ENCODE measurements at regions of chr1 and their contacts with region 1.

Region 1: DNA sequence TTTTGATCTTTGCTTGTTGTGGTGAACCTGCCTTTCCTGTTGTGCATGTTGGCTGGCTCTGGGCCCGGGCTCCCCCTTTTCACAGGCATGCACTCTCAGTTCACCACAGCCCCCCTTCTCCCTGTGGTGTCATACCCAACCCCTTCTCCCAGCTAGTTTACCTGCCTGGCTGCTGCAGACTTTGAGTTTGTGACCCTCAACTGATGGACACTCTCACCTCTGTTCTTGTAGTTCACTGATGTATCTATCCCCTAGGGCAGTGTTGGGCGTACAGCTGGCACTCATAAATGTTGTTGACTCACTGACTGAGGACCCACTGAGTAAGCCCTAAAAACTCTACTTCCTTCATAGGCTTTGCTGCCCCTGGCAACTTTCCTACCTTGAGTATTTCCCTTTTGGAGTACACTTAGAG is 54.9 kb downstream of the WDR64 start:
- DNase-seq: peak; percentile 87 to 99
- H3K4me3 ChIP-seq: no peak overlapping the region; the same call in 1 of the 2 replicates
- H3K27ac ChIP-seq: peak overlapping the region; percentile 77
- H3K4me1 ChIP-seq: peaks cover 58% of the 10 kb centered on the region
- H3K27me3 ChIP-seq: no peaks in the 10 kb centered on the region
- CTCF ChIP-seq: no peak

Region 2: GRCh38 chr1:240784776-240785175 is 922.2 kb before region 1 on chr1:
- CTCF ChIA-PET with region 1: no interaction called
- POLR2A ChIA-PET with region 1: no interaction called
- intact Hi-C with region 1: loop called (anchors 10 kb)
- DNase-seq: no peak
- H3K4me3 ChIP-seq: no peak overlapping the region
- H3K27ac ChIP-seq: no peak overlapping the region
- H3K4me1 ChIP-seq: peaks cover 16% of the 10 kb centered on the region; the same call in 1 of the 2 replicates
- H3K27me3 ChIP-seq: no peaks in the 10 kb centered on the region
- CTCF ChIP-seq: no peak

Region 3: GRCh38 chr1:241336335-241336734 is 370.6 kb before region 1 on chr1:
- CTCF ChIA-PET with region 1: no interaction called
- POLR2A ChIA-PET with region 1: no interaction called
- intact Hi-C with region 1: no loop called
- DNase-seq: no peak
- H3K4me3 ChIP-seq: no peak overlapping the region
- H3K27ac ChIP-seq: no peak overlapping the region
- H3K4me1 ChIP-seq: no peaks in the 10 kb centered on the region
- H3K27me3 ChIP-seq: peaks cover 34% of the 10 kb centered on the region
- CTCF ChIP-seq: no peak

Region 4: GRCh38 chr1:241531195-241532161 is 175.5 kb before region 1 on chr1:
- CTCF ChIA-PET with region 1: no interaction called
- POLR2A ChIA-PET with region 1: no interaction called
- intact Hi-C with region 1: loop called (anchors 5 kb)
- DNase-seq: peak in 1 of 2 experiments; percentile 76
- H3K4me3 ChIP-seq: peak overlapping the region; percentile 44; the same call in 1 of the 2 replicates
- H3K27ac ChIP-seq: no peak overlapping the region
- H3K4me1 ChIP-seq: peaks cover 28% of the 10 kb centered on the region
- H3K27me3 ChIP-seq: no peaks in the 10 kb centered on the region
- CTCF ChIP-seq: peak; percentile 82

Region 5: GRCh38 chr1:241640029-241640818 is 66.7 kb before region 1 on chr1 and contains the starts of genes CHML and OPN3:
- CTCF ChIA-PET with region 1: no interaction called
- POLR2A ChIA-PET with region 1: interaction called, 13 read pairs
- intact Hi-C with region 1: loop called (anchors 1 kb)
- DNase-seq: peak; percentile 70 to 93
- H3K4me3 ChIP-seq: peak within 1 kb of the TSS; percentile 78
- H3K27ac ChIP-seq: peak within 1 kb of the TSS; percentile 86
- H3K4me1 ChIP-seq: peaks cover 46% of the 10 kb centered on the region
- H3K27me3 ChIP-seq: no peaks in the 10 kb centered on the region
- CTCF ChIP-seq: no peak
- total RNA-seq, gene CHML: 34.6 and 47.8 TPM in 2 replicates
- total RNA-seq, gene OPN3: 53.2 and 62.7 TPM in 2 replicates

Region 6: GRCh38 chr1:241749901-241750695 is 43.1 kb after region 1 on chr1:
- CTCF ChIA-PET with region 1: no interaction called
- POLR2A ChIA-PET with region 1: no interaction called
- intact Hi-C with region 1: loop called (anchors 1 kb)
- DNase-seq: peak; percentile 22 to 95
- H3K4me3 ChIP-seq: peak overlapping the region; percentile 60
- H3K27ac ChIP-seq: peak overlapping the region; percentile 94
- H3K4me1 ChIP-seq: peaks cover 35% of the 10 kb centered on the region
- H3K27me3 ChIP-seq: no peaks in the 10 kb centered on the region
- CTCF ChIP-seq: no peak

Region 7: DNA sequence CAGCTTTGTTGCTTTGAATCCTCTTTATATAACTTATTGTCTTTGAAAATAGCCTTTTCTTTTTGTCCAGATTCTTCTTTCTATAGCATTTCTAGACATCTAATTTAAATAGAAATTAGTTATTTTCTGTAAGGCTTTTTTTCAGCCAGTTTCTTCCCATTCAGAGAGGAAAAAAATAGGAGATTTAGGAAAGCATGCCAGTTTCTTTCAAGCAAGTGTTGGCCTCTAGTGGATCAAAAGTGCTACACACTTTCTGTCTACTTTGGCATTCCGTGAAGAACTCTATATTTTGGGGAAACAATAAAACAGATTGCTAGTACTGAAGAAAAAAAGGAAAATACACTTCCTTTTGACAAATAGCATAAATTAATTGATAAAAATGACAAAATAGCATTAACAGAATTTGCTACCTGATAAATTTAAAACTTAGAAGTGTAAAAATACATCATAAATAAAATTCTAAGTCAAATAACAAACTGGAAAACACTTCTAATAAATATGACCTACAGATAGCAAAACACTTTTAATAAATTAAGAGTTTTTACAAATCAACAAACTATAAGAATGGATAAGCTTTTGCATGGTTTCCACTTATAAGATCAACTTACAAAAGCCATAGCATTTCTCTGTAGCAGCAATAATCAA is 127.9 kb after region 1 on chr1:
- CTCF ChIA-PET with region 1: no interaction called
- POLR2A ChIA-PET with region 1: no interaction called
- intact Hi-C with region 1: loop called (anchors 1 kb)
- DNase-seq: peak; percentile 15 to 60
- H3K4me3 ChIP-seq: no peak overlapping the region
- H3K27ac ChIP-seq: no peak overlapping the region
- H3K4me1 ChIP-seq: peaks cover 17% of the 10 kb centered on the region
- H3K27me3 ChIP-seq: no peaks in the 10 kb centered on the region
- CTCF ChIP-seq: peak; percentile 82

Region 8: DNA sequence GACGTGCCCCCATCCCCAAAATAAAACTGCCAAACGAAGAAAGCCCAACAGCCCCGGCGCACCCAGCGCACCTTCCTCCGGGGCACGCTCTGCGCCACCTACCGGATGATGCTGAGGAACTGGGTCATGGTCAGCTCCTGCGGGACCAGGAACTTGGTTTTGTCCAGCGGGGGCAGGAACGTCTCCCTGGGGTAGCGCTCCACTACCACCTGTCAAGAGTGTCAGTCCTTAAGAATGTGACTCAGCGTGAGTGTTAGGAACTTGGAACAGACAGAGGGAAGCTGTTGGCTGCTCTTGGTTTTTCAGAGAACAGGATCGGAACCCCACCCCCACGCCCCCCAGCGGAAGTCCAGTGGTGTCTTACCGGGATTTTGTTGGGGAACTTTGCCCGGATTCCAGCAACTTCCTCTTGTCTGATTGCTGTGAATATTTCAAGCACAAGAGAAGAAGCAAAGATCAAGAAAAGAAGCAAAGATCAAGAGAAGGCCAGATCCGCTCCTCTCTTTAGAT is 291.5 kb after region 1 on chr1:
- CTCF ChIA-PET with region 1: no interaction called
- POLR2A ChIA-PET with region 1: no interaction called
- intact Hi-C with region 1: loop called (anchors 10 kb)
- DNase-seq: peak; percentile 58 to 80
- H3K4me3 ChIP-seq: no peak overlapping the region
- H3K27ac ChIP-seq: no peak overlapping the region
- H3K4me1 ChIP-seq: no peaks in the 10 kb centered on the region
- H3K27me3 ChIP-seq: no peaks in the 10 kb centered on the region
- CTCF ChIP-seq: no peak; the same call in 1 of the 2 replicates